Activated T-helper 2 cell treated with anti-CD3 and anti-CD28 coated beads, Interferon-gamma antibody, Interleukin-2, Interleukin-4, amounts not matched to agents 10 μg/mL and 5 μg/mL and 100 μg/mL, durations not matched to agents 14 hours and 24 hours and 36 hours (primary cell): ENCODE measurements at regions of chr7 and their contacts with region 1.

Region 1: GRCh38 chr7:100208911-100209408 is 10.8 kb upstream of the PVRIG start:
- DNase-seq: peak; percentile 46
- H3K4me3 Mint-ChIP-seq: peak overlapping the region; percentile 60
- H3K27ac Mint-ChIP-seq: peak overlapping the region; percentile 79
- H3K4me1 Mint-ChIP-seq: peaks cover 43% of the 10 kb centered on the region
- H3K27me3 Mint-ChIP-seq: no peaks in the 10 kb centered on the region

Region 2: GRCh38 chr7:100148559-100149350 is 60.2 kb before region 1 on chr7 and contains the start of gene LAMTOR4:
- intact Hi-C with region 1: loop called (anchors 2 kb)
- DNase-seq: peak; percentile 99
- H3K4me3 Mint-ChIP-seq: peak within 1 kb of the TSS; percentile 96
- H3K27ac Mint-ChIP-seq: peak within 1 kb of the TSS; percentile 95
- H3K4me1 Mint-ChIP-seq: peaks cover 21% of the 10 kb centered on the region
- H3K27me3 Mint-ChIP-seq: no peaks in the 10 kb centered on the region
- total RNA-seq, gene LAMTOR4: 125 and 130 TPM in 2 replicates

Region 3: GRCh38 chr7:100167921-100168323 is 41.0 kb before region 1 on chr7:
- intact Hi-C with region 1: loop called (anchors 5 kb)
- DNase-seq: no peak
- H3K4me3 Mint-ChIP-seq: peak overlapping the region; percentile 75
- H3K27ac Mint-ChIP-seq: no peak overlapping the region
- H3K4me1 Mint-ChIP-seq: peaks cover 64% of the 10 kb centered on the region
- H3K27me3 Mint-ChIP-seq: peaks cover 6% of the 10 kb centered on the region

Region 4: GRCh38 chr7:100177045-100178001 is 31.6 kb before region 1 on chr7 and contains the starts of genes GPC2 and STAG3:
- intact Hi-C with region 1: loop called (anchors 1 kb)
- DNase-seq: peak; percentile 98
- H3K4me3 Mint-ChIP-seq: peak within 1 kb of the TSS; percentile 82
- H3K27ac Mint-ChIP-seq: peak within 1 kb of the TSS; percentile 77
- H3K4me1 Mint-ChIP-seq: peaks cover 35% of the 10 kb centered on the region
- H3K27me3 Mint-ChIP-seq: peaks cover 2% of the 10 kb centered on the region
- total RNA-seq, gene GPC2: 7.0 and 7.8 TPM in 2 replicates
- total RNA-seq, gene STAG3: 20.6 and 22.3 TPM in 2 replicates